SK-N-SH (cell line): ENCODE measurements at regions of chr1 and their contacts with region 1.

Region 1: DNA sequence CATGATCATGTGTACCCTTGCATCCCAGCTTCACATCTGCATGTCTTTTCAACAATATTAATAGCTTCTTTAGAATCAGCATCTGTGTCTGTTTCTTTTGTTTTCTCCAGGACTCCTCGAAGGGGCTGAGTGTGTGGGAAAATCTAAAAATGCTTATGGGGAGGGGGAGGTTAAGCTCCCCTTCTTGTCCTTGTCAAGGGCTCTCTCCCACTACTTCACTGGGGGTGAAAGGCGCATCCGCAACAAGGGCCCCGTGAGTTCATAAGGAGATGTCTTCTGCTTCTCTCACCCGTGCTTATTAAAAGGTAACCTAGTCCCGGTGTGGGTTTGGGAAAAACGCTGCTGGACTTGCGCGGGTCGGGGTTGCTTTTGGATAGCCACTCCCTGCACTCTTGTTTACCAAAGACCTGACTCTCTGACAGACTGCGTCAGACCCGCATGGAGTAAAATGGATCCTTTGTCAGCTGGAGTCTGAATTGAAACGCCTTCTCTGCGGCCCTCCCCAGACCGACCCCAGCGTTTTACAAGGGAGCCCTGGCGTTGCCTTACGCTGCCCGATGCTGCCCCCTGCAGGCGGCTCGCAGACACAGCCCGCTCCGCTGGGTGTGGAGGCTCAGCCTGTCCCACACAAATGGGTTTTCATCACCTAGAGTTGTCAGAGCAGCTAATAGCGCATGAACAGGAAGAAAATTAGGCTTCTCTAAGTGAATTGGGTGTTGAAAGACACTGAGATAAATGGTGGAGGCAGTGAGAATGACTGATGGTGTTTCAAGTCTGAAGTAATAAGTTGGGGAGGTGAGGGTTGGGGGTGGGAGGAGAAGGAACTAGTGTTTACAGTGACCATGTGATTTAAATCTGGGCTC is 53.8 kb downstream of the IER5 start:
- DNase-seq: peak; percentile 88
- H3K4me3 ChIP-seq: peak overlapping the region in 1 of 2 experiments; percentile 28; a peak in 1 of 4 replicates
- H3K27ac ChIP-seq: peak overlapping the region in 1 of 2 experiments; percentile 61; a peak in 2 of 4 replicates
- H3K4me1 ChIP-seq: peaks cover 4 to 29% of the 10 kb centered on the region in 2 experiments; a peak in 3 of 4 replicates
- H3K27me3 ChIP-seq: no peaks in the 10 kb centered on the region
- CTCF ChIP-seq: peak; percentile 99
- EP300 ChIP-seq: no peak
- RAD21 ChIP-seq: peak; percentile 98

Region 2: GRCh38 chr1:180881806-180882509 is 260.4 kb before region 1 on chr1:
- CTCF ChIA-PET with region 1: interaction called, 145 read pairs
- POLR2A ChIA-PET with region 1: no interaction called
- DNase-seq: peak; percentile 65
- H3K4me3 ChIP-seq: no peak overlapping the region; a peak in 1 of 4 replicates
- H3K27ac ChIP-seq: no peak overlapping the region
- H3K4me1 ChIP-seq: no peaks in the 10 kb centered on the region
- H3K27me3 ChIP-seq: no peaks in the 10 kb centered on the region
- CTCF ChIP-seq: peak; percentile 69
- EP300 ChIP-seq: no peak
- RAD21 ChIP-seq: peak; percentile 89

Region 3: GRCh38 chr1:180975551-180975950 is 166.8 kb before region 1 on chr1:
- CTCF ChIA-PET with region 1: interaction called, 13 read pairs
- POLR2A ChIA-PET with region 1: interaction called, 3 read pairs
- DNase-seq: no peak
- H3K4me3 ChIP-seq: no peak overlapping the region
- H3K27ac ChIP-seq: no peak overlapping the region; a peak in 1 of 4 replicates
- H3K4me1 ChIP-seq: peaks cover 0 to 15% of the 10 kb centered on the region in 2 experiments; a peak in 2 of 4 replicates
- H3K27me3 ChIP-seq: no peaks in the 10 kb centered on the region
- CTCF ChIP-seq: no peak
- EP300 ChIP-seq: no peak
- RAD21 ChIP-seq: no peak

Region 4: DNA sequence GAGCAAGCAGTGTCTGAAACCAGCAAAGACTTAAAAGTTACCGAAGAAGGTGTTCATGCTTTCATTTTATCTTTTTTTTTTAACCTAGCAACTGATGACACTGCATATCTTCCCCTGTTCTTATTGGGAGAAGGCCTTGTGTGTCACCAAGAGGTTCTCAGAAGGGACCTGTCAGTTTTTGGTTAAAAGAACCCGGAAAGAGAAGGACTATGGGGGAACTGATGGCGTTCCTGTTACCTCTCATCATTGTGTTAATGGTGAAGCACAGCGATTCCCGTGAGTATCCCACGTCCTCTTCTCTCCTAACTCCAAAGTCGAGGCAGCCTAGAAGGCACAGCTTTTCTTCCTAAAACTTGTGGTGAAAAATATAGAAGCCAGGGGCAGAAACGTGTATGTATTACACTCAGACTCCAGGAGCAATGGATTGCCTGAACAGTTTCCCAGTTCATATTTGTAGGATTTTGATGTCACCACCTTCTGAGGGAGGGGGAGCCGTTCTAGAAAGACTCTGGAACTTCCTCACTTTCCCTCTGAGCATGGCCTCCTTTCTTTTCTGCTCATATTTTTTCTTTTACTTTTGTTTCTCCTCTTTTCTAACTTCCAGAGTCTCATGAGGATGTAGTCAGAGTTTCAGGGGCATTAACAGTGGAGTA is 108.4 kb before region 1 on chr1 and contains the start of gene MR1:
- CTCF ChIA-PET with region 1: interaction called, 91 read pairs
- POLR2A ChIA-PET with region 1: no interaction called
- DNase-seq: peak; percentile 42
- H3K4me3 ChIP-seq: peak within 1 kb of the TSS; percentile 24 to 33; a peak in 1 of 4 replicates
- H3K27ac ChIP-seq: peak within 1 kb of the TSS; percentile 64 to 67
- H3K4me1 ChIP-seq: peaks cover 0 to 10% of the 10 kb centered on the region in 2 experiments; a peak in 2 of 4 replicates
- H3K27me3 ChIP-seq: no peaks in the 10 kb centered on the region
- CTCF ChIP-seq: no peak
- EP300 ChIP-seq: no peak
- RAD21 ChIP-seq: no peak
- polyA plus RNA-seq, gene MR1: 7.0 and 9.7 TPM in 2 replicates

Region 5: GRCh38 chr1:181088079-181089016 is 54.0 kb before region 1 on chr1 and contains the start of gene IER5:
- CTCF ChIA-PET with region 1: interaction called, 145 read pairs
- POLR2A ChIA-PET with region 1: interaction called, 24 read pairs
- DNase-seq: peak; percentile 97
- H3K4me3 ChIP-seq: peak within 1 kb of the TSS; percentile 90 to 96
- H3K27ac ChIP-seq: peak within 1 kb of the TSS; percentile 77 to 81
- H3K4me1 ChIP-seq: peaks cover 10 to 16% of the 10 kb centered on the region in 2 experiments; a peak in 3 of 4 replicates
- H3K27me3 ChIP-seq: no peaks in the 10 kb centered on the region
- CTCF ChIP-seq: no peak
- EP300 ChIP-seq: 0 out of 4 replicates have a peak, but pooled peaks of 1 of the 2 experiments have one; percentile 15
- RAD21 ChIP-seq: no peak
- polyA plus RNA-seq, gene IER5: 46.2 and 52.9 TPM in 2 replicates

Region 6: DNA sequence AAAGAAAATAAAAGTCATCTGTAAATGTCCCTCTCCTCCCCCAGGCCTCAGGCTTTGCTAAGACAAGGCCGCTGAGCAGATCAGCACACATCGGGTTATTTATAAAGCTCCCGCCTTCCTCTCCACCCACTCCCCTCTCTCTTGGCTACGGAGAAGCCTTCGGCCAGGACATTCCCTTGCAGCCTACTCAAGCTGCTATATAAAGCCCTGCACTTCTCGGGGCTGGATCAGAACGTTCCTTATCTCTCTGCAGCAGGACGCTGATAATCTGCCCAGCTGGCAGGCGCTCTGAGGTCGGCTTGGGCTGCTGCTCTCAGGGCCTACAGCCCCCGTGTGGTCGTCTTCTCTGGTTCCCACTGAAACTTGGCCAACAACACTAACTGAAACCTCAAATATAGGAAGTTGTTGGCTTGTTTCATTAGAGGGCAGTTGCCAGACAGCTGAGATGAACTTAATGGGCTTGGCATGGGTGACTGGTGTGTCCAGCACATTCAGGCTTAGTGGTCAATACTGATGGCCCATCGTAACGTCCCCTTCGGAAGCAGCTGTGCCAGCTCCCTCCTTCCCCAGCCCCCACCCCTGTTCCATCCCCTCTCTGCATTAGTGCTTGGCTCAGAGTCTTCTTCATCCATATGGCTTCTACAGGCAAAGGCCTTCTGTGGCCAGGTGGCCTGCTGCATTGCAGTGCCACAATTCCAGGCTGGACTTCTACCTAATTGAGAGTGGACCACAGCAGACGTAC is 10.7 kb after region 1 on chr1:
- CTCF ChIA-PET with region 1: interaction called, 72 read pairs
- POLR2A ChIA-PET with region 1: no interaction called
- DNase-seq: peak; percentile 68
- H3K4me3 ChIP-seq: no peak overlapping the region; a peak in 1 of 4 replicates
- H3K27ac ChIP-seq: peak overlapping the region in 1 of 2 experiments; percentile 4; a peak in 2 of 4 replicates
- H3K4me1 ChIP-seq: peaks cover 4 to 20% of the 10 kb centered on the region in 2 experiments; a peak in 2 of 4 replicates
- H3K27me3 ChIP-seq: no peaks in the 10 kb centered on the region
- CTCF ChIP-seq: peak; percentile 15; the same call in 1 of the 2 replicates
- EP300 ChIP-seq: no peak
- RAD21 ChIP-seq: peak; percentile 40